ENCODE measurements at regions of chr11 and their contacts with region 1.

Region 1: GRCh38 chr11:123478352-123478987 is 48.4 kb downstream of the GRAMD1B start:
- DNase-seq: peak; percentile 64
- ATAC-seq: peak; percentile 88
- H3K4me3 ChIP-seq: no peak overlapping the region
- H3K27ac ChIP-seq: no peak overlapping the region
- H3K4me1 ChIP-seq: no peaks in the 10 kb centered on the region
- H3K27me3 ChIP-seq: peaks cover 0 to 11% of the 10 kb centered on the region in 2 experiments; a peak in 3 of 5 replicates
- CTCF ChIP-seq: peak; percentile 71
- EP300 ChIP-seq: no peak
- POLR2A ChIP-seq: no peak
- RAD21 ChIP-seq: peak; percentile 49; the same call in 1 of the 2 replicates

Region 2: DNA sequence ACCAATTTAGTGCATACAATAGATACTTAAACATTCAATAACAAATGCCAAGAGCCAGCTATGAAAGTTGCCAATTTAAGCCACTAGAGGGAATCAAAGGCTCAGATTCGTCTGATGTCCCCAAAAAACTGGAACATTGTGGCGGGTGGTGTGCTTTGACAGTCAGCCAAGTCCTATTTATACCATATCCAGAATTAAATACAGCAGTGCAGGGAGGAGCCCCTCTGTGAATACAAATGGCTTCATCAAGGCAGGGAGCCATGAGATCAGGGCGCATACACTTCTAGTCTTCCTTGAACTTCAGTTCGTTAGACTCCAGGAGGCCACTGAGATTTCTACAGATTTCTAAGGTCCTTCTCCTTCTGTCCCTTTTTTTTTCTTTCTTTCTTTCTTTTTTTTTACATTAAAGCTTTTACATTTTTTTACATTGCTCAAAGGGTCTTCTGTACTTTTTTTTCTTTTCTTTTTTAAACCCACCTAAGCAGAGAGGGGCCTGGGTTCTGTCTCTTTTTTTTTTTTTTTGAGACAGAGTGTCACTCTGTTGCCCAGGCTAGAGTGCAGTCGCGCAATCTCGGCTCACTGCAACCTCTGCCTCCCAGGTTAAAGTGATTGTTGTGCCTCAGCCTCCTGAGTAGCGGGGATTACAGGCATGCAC is 375.0 kb before region 1 on chr11:
- CTCF ChIA-PET with region 1: no interaction called
- POLR2A ChIA-PET with region 1: no interaction called
- in situ Hi-C with region 1: loop called (anchors 25 kb)
- intact Hi-C with region 1: no loop called
- DNase-seq: peak; percentile 18
- ATAC-seq: peak; percentile 63
- H3K4me3 ChIP-seq: no peak overlapping the region
- H3K27ac ChIP-seq: no peak overlapping the region
- H3K4me1 ChIP-seq: no peaks in the 10 kb centered on the region
- H3K27me3 ChIP-seq: peaks cover 0 to 18% of the 10 kb centered on the region in 2 experiments; a peak in 3 of 5 replicates
- CTCF ChIP-seq: peak; percentile 50
- EP300 ChIP-seq: no peak
- POLR2A ChIP-seq: no peak
- RAD21 ChIP-seq: no peak

Region 3: DNA sequence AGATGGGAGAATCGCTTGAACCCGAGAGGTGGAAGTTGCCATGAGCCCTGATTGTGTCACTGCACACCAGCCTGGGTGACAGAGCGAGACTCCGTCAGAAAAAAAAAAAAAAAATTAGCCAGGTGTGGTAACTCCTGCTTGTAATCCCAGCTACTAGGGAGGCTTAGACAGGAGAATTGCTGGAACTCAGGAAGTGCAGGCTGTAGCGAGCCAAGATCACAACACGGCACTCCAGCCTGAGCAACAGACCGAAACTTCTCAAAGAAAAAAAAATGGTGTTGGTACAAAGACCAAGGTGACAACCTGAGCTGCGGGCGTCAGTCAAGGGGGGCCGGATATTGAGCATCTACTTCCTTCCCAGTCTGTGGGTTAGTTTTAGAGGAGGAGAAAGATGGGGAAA is 368.1 kb before region 1 on chr11:
- CTCF ChIA-PET with region 1: no interaction called
- POLR2A ChIA-PET with region 1: no interaction called
- in situ Hi-C with region 1: loop called (anchors 25 kb)
- intact Hi-C with region 1: loop called (anchors 1 kb)
- DNase-seq: no peak
- ATAC-seq: no peak
- H3K4me3 ChIP-seq: no peak overlapping the region
- H3K27ac ChIP-seq: no peak overlapping the region
- H3K4me1 ChIP-seq: no peaks in the 10 kb centered on the region
- H3K27me3 ChIP-seq: peaks cover 0 to 14% of the 10 kb centered on the region in 2 experiments; a peak in 3 of 5 replicates
- CTCF ChIP-seq: no peak
- EP300 ChIP-seq: no peak
- POLR2A ChIP-seq: no peak
- RAD21 ChIP-seq: no peak

Region 4: DNA sequence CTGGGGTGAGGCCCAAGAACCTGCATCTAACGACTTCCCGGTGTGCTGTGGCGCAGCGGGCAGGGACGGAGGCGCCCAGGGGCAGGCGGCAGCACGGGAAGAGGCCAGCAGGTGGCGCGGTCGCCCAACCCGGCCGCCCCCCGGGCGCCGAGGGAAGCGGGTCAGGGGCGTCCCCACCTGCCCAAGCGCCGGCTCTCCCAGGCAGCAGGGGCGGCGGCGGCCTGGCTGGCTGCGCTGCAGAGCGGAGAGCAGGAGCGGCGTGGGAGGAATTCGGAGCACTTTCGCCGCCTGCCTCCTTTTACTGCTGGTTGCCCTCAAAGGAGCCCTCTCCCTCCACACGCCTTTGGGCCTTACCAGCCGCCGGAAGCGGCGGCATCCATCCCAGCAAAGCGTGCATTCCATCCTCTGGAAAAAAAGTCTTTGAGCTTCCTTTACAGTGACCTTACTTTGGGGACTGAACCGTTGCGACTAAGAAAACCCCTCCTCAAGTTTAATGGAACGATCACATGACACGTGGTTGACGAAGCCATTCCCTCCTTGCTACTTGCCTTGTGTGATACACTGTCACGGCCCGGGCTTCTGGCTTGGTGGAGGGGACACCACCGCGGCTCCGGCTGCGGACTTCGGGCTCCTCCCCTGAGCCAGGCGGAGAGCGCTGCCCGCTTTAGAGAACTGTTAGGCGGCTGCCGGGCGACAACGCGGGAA is 176.6 kb before region 1 on chr11:
- CTCF ChIA-PET with region 1: interaction called, 21 read pairs
- POLR2A ChIA-PET with region 1: no interaction called
- in situ Hi-C with region 1: loop called (anchors 5 kb)
- intact Hi-C with region 1: no loop called
- DNase-seq: no peak
- ATAC-seq: peak; percentile 97
- H3K4me3 ChIP-seq: no peak overlapping the region
- H3K27ac ChIP-seq: no peak overlapping the region
- H3K4me1 ChIP-seq: no peaks in the 10 kb centered on the region
- H3K27me3 ChIP-seq: peaks cover 5 to 50% of the 10 kb centered on the region in 2 experiments; a peak in 4 of 5 replicates
- CTCF ChIP-seq: peak; percentile 73
- EP300 ChIP-seq: no peak
- POLR2A ChIP-seq: no peak
- RAD21 ChIP-seq: peak; percentile 82

Region 5: GRCh38 chr11:123407130-123407995 is 71.1 kb before region 1 on chr11:
- CTCF ChIA-PET with region 1: interaction called, 31 read pairs
- POLR2A ChIA-PET with region 1: interaction called, 6 read pairs
- in situ Hi-C with region 1: loop called (anchors 5 kb)
- intact Hi-C with region 1: loop called (anchors 1 kb)
- DNase-seq: peak; percentile 58
- ATAC-seq: peak; percentile 94
- H3K4me3 ChIP-seq: no peak overlapping the region
- H3K27ac ChIP-seq: no peak overlapping the region
- H3K4me1 ChIP-seq: no peaks in the 10 kb centered on the region
- H3K27me3 ChIP-seq: peaks cover 0 to 24% of the 10 kb centered on the region in 2 experiments; a peak in 1 of 5 replicates
- CTCF ChIP-seq: peak; percentile 74
- EP300 ChIP-seq: no peak
- POLR2A ChIP-seq: no peak
- RAD21 ChIP-seq: peak; percentile 58

Region 6: GRCh38 chr11:123511037-123511870 is 32.8 kb after region 1 on chr11:
- CTCF ChIA-PET with region 1: no interaction called
- POLR2A ChIA-PET with region 1: no interaction called
- in situ Hi-C with region 1: no loop called
- intact Hi-C with region 1: no loop called
- DNase-seq: peak; percentile 66
- ATAC-seq: peak; percentile 98
- H3K4me3 ChIP-seq: no peak overlapping the region
- H3K27ac ChIP-seq: no peak overlapping the region
- H3K4me1 ChIP-seq: no peaks in the 10 kb centered on the region
- H3K27me3 ChIP-seq: no peaks in the 10 kb centered on the region; a peak in 1 of 5 replicates
- CTCF ChIP-seq: peak; percentile 77
- EP300 ChIP-seq: no peak
- POLR2A ChIP-seq: no peak
- RAD21 ChIP-seq: peak; percentile 32